ENCODE measurements at regions of chr9 and their contacts with region 1.

Region 1: GRCh38 chr9:96441798-96442445 is 8.0 kb upstream of the HABP4 start:
- DNase-seq: peak in 1 of 2 donors; percentile 55
- ATAC-seq: no peak
- H3K4me3 ChIP-seq: no peak overlapping the region
- H3K4me3 Mint-ChIP-seq: no peak overlapping the region
- H3K27ac ChIP-seq: no peak overlapping the region
- H3K27ac Mint-ChIP-seq: no peak overlapping the region
- H3K4me1 ChIP-seq: no peaks in the 10 kb centered on the region
- H3K4me1 Mint-ChIP-seq: no peaks in the 10 kb centered on the region
- H3K27me3 ChIP-seq: no peaks in the 10 kb centered on the region
- H3K27me3 Mint-ChIP-seq: peaks cover 0 to 9% of the 10 kb centered on the region in 2 donors
- CTCF ChIP-seq: no peak

Region 2: DNA sequence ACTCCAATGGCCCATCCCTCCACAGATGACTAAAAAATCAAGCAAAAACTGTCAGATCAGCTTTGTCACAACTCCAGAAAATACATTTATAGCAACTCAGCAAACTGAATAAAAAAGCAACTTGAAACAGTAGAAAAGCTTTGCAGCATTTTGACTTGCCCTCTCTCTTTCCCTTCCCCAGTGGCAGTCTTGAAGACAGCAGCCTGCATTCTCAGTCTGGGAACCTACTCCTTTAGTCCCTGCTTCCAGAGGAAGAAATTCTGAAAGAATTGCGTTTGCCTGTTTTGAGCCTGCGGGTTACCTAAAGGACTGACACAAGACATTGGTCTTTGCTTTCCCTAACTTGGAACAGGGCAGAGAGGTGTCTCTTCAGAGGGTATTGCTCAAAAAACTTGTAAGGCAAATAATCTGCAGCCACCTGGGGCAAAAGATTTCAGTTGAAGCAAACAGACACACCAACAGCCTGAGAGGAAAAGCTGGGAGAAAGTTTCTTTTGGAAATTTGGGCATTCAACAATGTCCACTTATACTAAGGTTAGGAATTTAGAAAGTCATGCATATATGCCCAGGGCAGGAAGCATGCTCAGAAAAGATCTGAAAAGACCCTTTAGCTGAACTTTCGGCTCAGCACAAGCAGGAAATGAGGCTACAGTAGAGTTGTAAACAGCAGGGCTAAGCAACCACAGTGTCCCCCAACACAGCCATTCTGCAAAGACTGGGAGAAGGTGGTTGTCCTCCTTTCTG is 43.2 kb before region 1 on chr9:
- intact Hi-C with region 1: loop called (anchors 1 kb)
- DNase-seq: peak in 1 of 2 donors; percentile 56
- ATAC-seq: peak; percentile 46 to 78 (median 72)
- H3K4me3 ChIP-seq: no peak overlapping the region
- H3K4me3 Mint-ChIP-seq: peak overlapping the region; percentile 49
- H3K27ac ChIP-seq: peak overlapping the region; percentile 70
- H3K27ac Mint-ChIP-seq: peak overlapping the region; percentile 81 to 88
- H3K4me1 ChIP-seq: peaks cover 18% of the 10 kb centered on the region
- H3K4me1 Mint-ChIP-seq: peaks cover 18 to 22% of the 10 kb centered on the region in 2 donors
- H3K27me3 ChIP-seq: no peaks in the 10 kb centered on the region
- H3K27me3 Mint-ChIP-seq: no peaks in the 10 kb centered on the region
- CTCF ChIP-seq: no peak

Measured in natural killer cell (primary cell).